ENCODE measurements at regions of chr11 and their contacts with region 1.

Region 1: DNA sequence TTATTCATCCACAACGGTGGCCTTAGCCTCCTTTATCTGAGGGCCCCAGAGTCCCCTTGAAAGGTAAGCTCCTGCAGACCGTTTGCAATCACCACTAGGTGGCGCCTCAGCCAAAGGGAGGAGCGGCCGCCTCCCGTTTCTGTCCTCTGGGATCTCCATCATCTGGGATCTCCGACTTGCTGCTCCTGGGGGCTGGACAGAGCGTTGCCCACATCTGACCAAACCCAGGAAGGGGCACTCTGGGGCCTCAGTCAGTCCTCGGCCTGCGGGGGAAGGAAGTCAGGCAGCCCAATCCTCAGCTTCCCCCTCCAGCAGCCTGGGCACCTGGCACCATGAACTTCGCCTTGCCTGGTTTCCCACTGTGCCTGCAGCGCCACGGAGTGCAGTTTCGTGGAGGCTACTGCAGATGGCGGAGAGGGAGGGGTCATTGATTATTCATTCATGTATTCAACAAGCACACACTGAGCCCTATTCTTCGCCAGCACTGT is 23.5 kb downstream of the TP53I11 start:
- DNase-seq: peak; percentile 78 to 98 (median 89)

Region 2: GRCh38 chr11:44711108-44711786 is 216.0 kb before region 1 on chr11:
- intact Hi-C with region 1: no loop called
- DNase-seq: no peak

Region 3: DNA sequence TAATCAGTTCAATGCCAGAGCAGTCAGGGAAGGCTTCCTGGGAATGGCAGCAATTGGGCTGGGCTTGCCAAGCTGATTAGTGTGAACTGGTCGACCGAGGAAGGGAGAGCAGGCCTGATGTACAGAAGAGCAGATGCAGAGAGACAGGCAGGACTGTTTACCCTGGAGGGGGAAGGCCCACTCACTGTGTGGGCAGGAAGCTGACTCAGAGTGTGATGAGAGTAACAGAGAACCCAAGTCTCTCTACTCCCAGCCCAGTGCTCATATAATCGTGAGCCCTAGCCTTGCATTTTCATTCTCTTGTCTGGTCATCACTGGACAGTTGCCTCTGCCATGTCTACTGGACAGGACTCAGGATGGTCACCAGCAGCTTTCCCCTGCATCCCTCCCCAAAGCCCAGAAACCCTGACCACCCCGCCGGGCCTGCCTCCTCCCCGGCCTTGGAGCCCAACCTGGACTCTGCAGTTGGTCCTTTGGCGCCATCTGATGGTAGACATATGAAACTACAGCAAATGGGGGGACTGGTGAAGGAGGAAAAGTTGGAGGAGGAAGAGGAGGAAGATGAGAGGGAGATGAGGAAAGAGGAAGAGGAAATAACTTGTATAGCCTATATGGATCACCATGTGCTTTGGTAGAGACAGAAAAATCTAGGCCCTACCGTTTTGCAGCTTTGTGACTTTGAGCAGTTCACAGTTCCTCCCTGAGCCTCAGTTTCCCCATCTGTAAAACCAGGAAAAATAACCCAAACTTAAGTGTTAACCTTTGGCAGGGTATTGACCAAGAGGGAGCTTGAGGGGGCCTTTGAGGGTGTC is 175.8 kb after region 1 on chr11:
- intact Hi-C with region 1: loop called (anchors 2 kb)
- DNase-seq: peak in 5 of 10 donors; percentile 59 to 92 (median 65)